ENCODE measurements at regions of chr2 and their contacts with region 1.

Region 1: GRCh38 chr2:201231781-201232466 is 28.4 kb upstream of the CASP8 start:
- DNase-seq: peak; percentile 95
- ATAC-seq: peak; percentile 54
- H3K4me3 Mint-ChIP-seq: peak overlapping the region; percentile 91
- H3K27ac Mint-ChIP-seq: peak overlapping the region; percentile 88
- H3K4me1 Mint-ChIP-seq: peaks cover 46% of the 10 kb centered on the region
- H3K27me3 Mint-ChIP-seq: no peaks in the 10 kb centered on the region
- CTCF ChIP-seq: peak; percentile 93

Region 2: GRCh38 chr2:200888704-200889625 is 343.0 kb before region 1 on chr2 and contains the starts of genes NIF3L1 and PPIL3:
- CTCF ChIA-PET with region 1: interaction called, 13 read pairs
- POLR2A ChIA-PET with region 1: interaction called, 5 read pairs
- intact Hi-C with region 1: no loop called
- DNase-seq: peak; percentile 99
- ATAC-seq: peak; percentile 83
- H3K4me3 Mint-ChIP-seq: peak within 1 kb of the TSS; percentile 87
- H3K27ac Mint-ChIP-seq: peak within 1 kb of the TSS; percentile 99
- H3K4me1 Mint-ChIP-seq: peaks cover 46% of the 10 kb centered on the region
- H3K27me3 Mint-ChIP-seq: no peaks in the 10 kb centered on the region
- CTCF ChIP-seq: no peak
- total RNA-seq, gene NIF3L1: 30.8 to 35.3 TPM
- total RNA-seq, gene PPIL3: 97.9 to 99.4 TPM

Region 3: GRCh38 chr2:201118121-201118960 is 113.6 kb before region 1 on chr2:
- CTCF ChIA-PET with region 1: interaction called, 27 read pairs
- POLR2A ChIA-PET with region 1: interaction called, 3 read pairs
- intact Hi-C with region 1: no loop called
- DNase-seq: peak; percentile 97
- ATAC-seq: peak; percentile 45
- H3K4me3 Mint-ChIP-seq: peak overlapping the region; percentile 95
- H3K27ac Mint-ChIP-seq: peak overlapping the region; percentile 92
- H3K4me1 Mint-ChIP-seq: peaks cover 43% of the 10 kb centered on the region
- H3K27me3 Mint-ChIP-seq: no peaks in the 10 kb centered on the region
- CTCF ChIP-seq: peak; percentile 43

Region 4: GRCh38 chr2:201182650-201183364 is 49.1 kb before region 1 on chr2 and contains the start of gene CASP10:
- CTCF ChIA-PET with region 1: interaction called, 220 read pairs
- POLR2A ChIA-PET with region 1: interaction called, 42 read pairs
- intact Hi-C with region 1: loop called (anchors 1 kb)
- DNase-seq: peak; percentile 28
- ATAC-seq: peak; percentile 74
- H3K4me3 Mint-ChIP-seq: peak within 1 kb of the TSS; percentile 98
- H3K27ac Mint-ChIP-seq: peak within 1 kb of the TSS; percentile 99
- H3K4me1 Mint-ChIP-seq: peaks cover 43% of the 10 kb centered on the region
- H3K27me3 Mint-ChIP-seq: no peaks in the 10 kb centered on the region
- CTCF ChIP-seq: peak; percentile 29
- total RNA-seq, gene CASP10: 18.3 to 22.6 TPM

Region 5: DNA sequence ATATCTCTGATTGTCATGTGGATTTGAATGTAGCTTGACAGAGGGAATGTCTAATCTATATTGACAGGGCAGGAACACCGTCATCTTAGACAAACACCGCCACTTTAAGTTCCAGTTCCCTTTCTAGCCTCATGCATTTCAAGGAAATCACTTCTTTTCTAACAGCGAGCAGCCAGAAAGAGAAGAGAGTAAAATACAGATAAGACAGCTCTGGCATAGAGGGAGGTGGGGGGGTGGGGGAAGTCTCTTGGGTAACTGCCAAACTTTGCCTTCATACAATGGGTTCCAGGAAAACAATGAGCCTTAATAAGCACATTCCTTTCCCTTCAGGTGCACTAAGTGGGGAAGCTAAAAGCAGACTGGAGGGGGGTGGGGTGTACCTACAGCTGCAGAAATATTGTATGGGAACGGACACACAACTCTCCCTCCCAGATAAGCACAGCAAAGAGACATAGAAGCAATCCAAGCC is 11.8 kb before region 1 on chr2:
- CTCF ChIA-PET with region 1: interaction called, 83 read pairs
- POLR2A ChIA-PET with region 1: interaction called, 6 read pairs
- intact Hi-C with region 1: no loop called
- DNase-seq: peak; percentile 21
- ATAC-seq: no peak
- H3K4me3 Mint-ChIP-seq: no peak overlapping the region
- H3K27ac Mint-ChIP-seq: peak overlapping the region; percentile 63
- H3K4me1 Mint-ChIP-seq: peaks cover 51% of the 10 kb centered on the region
- H3K27me3 Mint-ChIP-seq: no peaks in the 10 kb centered on the region
- CTCF ChIP-seq: no peak

Region 6: GRCh38 chr2:201363857-201364560 is 132.1 kb after region 1 on chr2:
- CTCF ChIA-PET with region 1: interaction called, 69 read pairs
- POLR2A ChIA-PET with region 1: interaction called, 7 read pairs
- intact Hi-C with region 1: loop called (anchors 1 kb)
- DNase-seq: peak; percentile 33
- ATAC-seq: peak; percentile 96
- H3K4me3 Mint-ChIP-seq: no peak overlapping the region
- H3K27ac Mint-ChIP-seq: no peak overlapping the region
- H3K4me1 Mint-ChIP-seq: peaks cover 23% of the 10 kb centered on the region
- H3K27me3 Mint-ChIP-seq: no peaks in the 10 kb centered on the region
- CTCF ChIP-seq: peak; percentile 95

Region 7: DNA sequence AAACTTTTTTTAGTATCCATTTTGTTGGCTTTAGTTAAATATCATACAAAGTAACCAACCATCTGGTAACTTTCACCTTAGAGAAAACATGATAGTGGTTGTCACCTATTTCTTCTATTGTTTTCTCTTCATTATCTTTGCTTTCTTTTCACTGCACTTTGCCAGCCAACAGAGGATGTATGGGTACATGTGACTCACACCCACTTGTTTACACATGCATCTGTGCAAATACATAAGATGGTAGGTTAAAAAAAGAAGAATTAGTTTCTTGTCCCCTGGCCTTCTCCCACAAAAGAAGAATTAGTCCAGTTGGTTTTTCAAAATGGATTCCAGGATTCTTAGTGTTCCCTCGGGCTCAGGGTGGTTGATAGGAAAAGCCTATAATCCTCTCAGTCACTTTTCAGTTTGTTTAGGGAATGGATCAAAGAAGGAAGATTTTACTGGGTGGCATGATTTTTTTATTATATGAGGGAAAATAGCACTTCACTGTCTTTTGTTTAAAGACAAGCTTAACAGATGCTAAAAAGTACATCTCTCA is 621.0 kb after region 1 on chr2:
- CTCF ChIA-PET with region 1: no interaction called
- POLR2A ChIA-PET with region 1: no interaction called
- intact Hi-C with region 1: no loop called
- DNase-seq: no peak
- ATAC-seq: no peak
- H3K4me3 Mint-ChIP-seq: no peak overlapping the region
- H3K27ac Mint-ChIP-seq: no peak overlapping the region
- H3K4me1 Mint-ChIP-seq: no peaks in the 10 kb centered on the region
- H3K27me3 Mint-ChIP-seq: peaks cover 9% of the 10 kb centered on the region
- CTCF ChIP-seq: no peak